ENCODE measurements at regions of chr11 and their contacts with region 1.

Region 1: DNA sequence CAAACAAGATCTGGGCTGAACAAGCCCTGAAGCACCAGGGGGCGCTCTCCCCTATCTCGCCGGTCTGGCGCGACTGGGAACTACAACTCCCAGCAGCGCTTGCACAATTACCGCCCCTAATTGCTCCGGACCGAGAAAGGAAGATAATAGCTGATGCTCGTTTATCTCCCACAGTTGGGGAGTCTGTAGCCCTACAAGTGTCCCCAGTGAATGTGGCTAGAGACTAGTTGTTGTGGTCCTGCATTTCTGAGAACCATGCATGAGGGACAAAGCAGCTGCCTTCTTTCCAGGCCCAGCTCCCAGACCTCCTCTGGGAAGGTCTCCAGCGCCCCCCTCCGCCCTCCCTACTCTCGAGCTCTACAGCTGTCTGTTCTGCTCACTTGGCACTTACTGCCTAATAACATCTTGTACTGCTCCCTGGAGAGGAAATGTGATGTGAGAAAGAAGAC is 34.4 kb downstream of the NRXN2 start:
- DNase-seq: peak; percentile 46
- ATAC-seq: peak; percentile 99
- H3K4me3 ChIP-seq: no peak overlapping the region; the same call in 1 of the 2 replicates
- H3K27ac ChIP-seq: no peak overlapping the region
- H3K4me1 ChIP-seq: 0 out of 2 replicates have a peak, but pooled peaks cover 3% of the 10 kb centered on the region
- H3K27me3 ChIP-seq: no peaks in the 10 kb centered on the region; a peak in 1 of 4 replicates
- CTCF ChIP-seq: peak; percentile 83 to 92 (median 92)
- EP300 ChIP-seq: no peak
- POLR2A ChIP-seq: no peak
- RAD21 ChIP-seq: peak; percentile 69

Region 2: GRCh38 chr11:64378335-64378880 is 310.1 kb before region 1 on chr11:
- CTCF ChIA-PET with region 1: no interaction called
- POLR2A ChIA-PET with region 1: no interaction called
- RAD21 ChIA-PET with region 1: no interaction called
- SMC1A ChIA-PET with region 1: no interaction called
- in situ Hi-C with region 1: no loop called
- intact Hi-C with region 1: no loop called
- DNase-seq: no peak
- ATAC-seq: no peak
- H3K4me3 ChIP-seq: no peak overlapping the region
- H3K27ac ChIP-seq: no peak overlapping the region
- H3K4me1 ChIP-seq: no peaks in the 10 kb centered on the region
- H3K27me3 ChIP-seq: peaks cover 0 to under 1% of the 10 kb centered on the region in 2 experiments; a peak in 1 of 4 replicates
- CTCF ChIP-seq: no peak
- EP300 ChIP-seq: no peak
- POLR2A ChIP-seq: no peak
- RAD21 ChIP-seq: no peak

Region 3: GRCh38 chr11:64448599-64449556 is 239.7 kb before region 1 on chr11:
- CTCF ChIA-PET with region 1: interaction called, 19 read pairs
- POLR2A ChIA-PET with region 1: no interaction called
- RAD21 ChIA-PET with region 1: interaction called, 9 read pairs
- SMC1A ChIA-PET with region 1: no interaction called
- in situ Hi-C with region 1: no loop called
- intact Hi-C with region 1: no loop called
- DNase-seq: no peak
- ATAC-seq: peak; percentile 95
- H3K4me3 ChIP-seq: peak overlapping the region; percentile 67
- H3K27ac ChIP-seq: peak overlapping the region; percentile 58
- H3K4me1 ChIP-seq: peaks cover 21% of the 10 kb centered on the region
- H3K27me3 ChIP-seq: 0 out of 4 replicates have a peak, but pooled peaks cover 0 to 2% of the 10 kb centered on the region in 2 experiments
- CTCF ChIP-seq: peak; percentile 80 to 90 (median 90)
- EP300 ChIP-seq: no peak
- POLR2A ChIP-seq: no peak
- RAD21 ChIP-seq: peak; percentile 56

Region 4: DNA sequence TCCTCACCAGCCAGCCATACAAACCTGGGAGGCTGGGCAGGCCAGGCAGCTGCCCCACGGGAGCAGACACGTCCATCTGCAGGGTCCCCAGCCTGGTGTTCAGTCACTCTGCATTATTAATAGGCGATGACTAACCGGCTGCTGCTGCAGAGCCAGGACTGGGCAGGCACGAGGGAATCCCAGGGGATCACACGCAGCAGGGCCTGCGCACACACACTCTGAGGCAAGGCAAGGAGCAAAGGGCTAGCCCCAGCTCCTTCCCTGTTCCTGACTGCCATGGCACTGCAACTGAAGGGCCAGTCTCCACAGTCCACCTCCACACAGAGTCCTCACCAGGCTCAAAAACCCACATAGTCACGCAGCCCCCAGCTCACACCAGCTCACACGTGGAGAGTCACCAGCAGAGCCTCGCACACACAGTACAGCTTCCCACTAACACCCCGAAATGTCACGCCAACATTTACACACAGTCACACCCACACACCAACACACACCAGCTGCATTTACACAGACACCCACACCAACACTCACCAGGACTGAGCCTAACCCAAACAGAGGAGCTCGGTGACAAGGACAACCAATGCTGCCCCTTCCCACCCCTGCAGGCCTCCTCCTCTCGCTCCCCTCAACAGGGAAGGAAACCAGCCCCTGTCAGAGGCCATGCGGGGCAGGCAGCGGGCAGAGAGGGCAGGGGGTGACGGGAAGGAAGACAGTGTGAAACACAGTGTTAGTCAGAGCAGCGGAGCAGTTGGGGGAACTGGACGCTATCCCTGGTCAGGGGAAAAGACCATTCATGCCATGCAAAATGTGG is 12.9 kb before region 1 on chr11:
- CTCF ChIA-PET with region 1: interaction called, 67 read pairs
- POLR2A ChIA-PET with region 1: no interaction called
- RAD21 ChIA-PET with region 1: interaction called, 29 read pairs
- SMC1A ChIA-PET with region 1: interaction called, 30 read pairs
- in situ Hi-C with region 1: no loop called
- intact Hi-C with region 1: no loop called
- DNase-seq: no peak
- ATAC-seq: peak; percentile 76
- H3K4me3 ChIP-seq: no peak overlapping the region
- H3K27ac ChIP-seq: no peak overlapping the region
- H3K4me1 ChIP-seq: peaks cover 28% of the 10 kb centered on the region
- H3K27me3 ChIP-seq: peaks cover 2 to 4% of the 10 kb centered on the region in 2 experiments; a peak in 3 of 4 replicates
- CTCF ChIP-seq: no peak
- EP300 ChIP-seq: no peak
- POLR2A ChIP-seq: no peak
- RAD21 ChIP-seq: no peak

Region 5: DNA sequence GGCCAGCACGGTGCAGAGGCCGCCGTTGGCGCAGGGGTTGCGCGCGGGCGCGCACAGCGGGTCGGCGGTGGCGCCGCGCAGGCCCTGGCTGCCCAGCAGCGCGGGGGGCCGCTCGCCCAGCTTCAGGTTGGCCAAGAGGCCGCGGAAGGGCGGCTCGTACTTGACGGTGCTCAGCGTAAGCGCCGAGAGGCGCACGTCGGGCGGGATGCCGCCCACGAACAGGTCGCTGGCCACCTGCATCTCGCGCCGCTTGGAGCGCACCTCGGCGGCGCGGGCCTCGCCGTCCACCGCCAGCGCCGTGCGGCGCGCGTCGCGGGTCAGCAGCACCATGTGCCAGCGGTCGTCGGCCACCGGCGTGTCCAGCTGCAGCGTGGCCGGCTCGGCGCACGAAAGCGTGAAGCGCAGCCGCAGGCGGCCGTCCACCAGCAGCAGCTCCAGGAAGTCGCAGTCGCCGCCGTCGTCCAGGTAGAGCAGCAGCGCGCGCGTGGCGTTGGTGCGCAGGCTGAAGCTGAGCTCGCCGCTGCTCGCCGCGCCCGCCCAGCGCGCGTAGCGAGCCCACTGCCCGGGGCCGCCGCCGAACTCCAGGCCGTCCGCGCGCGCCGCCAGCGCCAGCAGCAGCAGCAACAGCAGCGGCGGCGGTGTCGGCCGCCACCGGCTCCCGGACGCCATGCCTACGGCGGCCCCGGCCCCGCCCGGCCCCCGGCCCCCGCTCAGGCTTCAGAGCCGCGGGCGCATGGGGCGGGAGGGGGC is 24.6 kb after region 1 on chr11:
- CTCF ChIA-PET with region 1: interaction called, 58 read pairs
- POLR2A ChIA-PET with region 1: no interaction called
- RAD21 ChIA-PET with region 1: interaction called, 12 read pairs
- SMC1A ChIA-PET with region 1: interaction called, 7 read pairs
- in situ Hi-C with region 1: no loop called
- intact Hi-C with region 1: no loop called
- DNase-seq: no peak
- ATAC-seq: no peak
- H3K4me3 ChIP-seq: no peak overlapping the region
- H3K27ac ChIP-seq: no peak overlapping the region
- H3K4me1 ChIP-seq: peaks cover 7% of the 10 kb centered on the region
- H3K27me3 ChIP-seq: peaks cover 6 to 10% of the 10 kb centered on the region in 2 experiments; a peak in 3 of 4 replicates
- CTCF ChIP-seq: no peak
- EP300 ChIP-seq: no peak
- POLR2A ChIP-seq: no peak
- RAD21 ChIP-seq: no peak

Region 6: DNA sequence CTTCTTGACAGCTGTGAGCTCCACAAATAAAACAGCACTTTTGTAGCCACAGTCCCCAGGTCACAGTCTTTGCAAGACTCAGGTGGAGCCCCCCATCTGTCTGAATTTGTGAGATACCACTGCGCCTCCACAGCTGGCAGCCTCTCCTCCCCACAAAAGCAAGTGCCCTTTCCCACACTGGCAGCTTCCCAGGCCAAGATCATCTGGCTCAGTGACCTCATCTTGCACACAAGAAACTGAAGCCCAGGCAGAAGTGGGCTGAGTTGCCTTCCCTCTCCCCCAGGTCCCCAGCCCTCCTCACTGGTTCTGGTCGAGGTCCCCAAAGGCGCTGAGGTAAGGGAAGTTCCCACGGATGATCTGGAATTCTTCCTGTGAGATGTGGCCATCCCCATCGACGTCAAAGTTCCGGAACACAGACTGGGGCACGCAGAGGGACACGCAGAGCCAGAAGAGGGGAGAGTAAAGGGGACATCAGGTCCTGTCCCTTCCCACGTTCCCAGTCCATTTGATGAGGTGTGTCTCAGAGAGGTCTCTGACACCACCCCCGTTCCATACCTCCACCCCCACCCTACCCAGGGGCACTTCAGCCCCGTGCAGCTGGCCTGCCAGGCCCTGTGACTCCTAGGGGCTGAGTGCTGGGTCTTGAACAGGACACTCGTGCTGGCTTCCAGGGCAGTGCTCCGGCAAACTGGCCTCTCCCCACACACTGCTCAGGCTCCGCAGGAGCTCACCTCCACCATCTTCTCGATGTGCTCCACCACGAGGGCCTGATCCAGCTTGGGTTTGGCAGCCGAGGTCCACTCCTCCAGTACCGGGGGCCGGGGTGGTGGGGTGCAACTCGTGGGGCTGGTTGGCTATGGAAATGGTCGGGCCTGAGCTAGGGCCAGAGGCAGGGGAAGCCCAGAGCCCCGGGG is 46.5 kb after region 1 on chr11:
- CTCF ChIA-PET with region 1: interaction called, 86 read pairs
- POLR2A ChIA-PET with region 1: no interaction called
- RAD21 ChIA-PET with region 1: interaction called, 12 read pairs
- SMC1A ChIA-PET with region 1: interaction called, 11 read pairs
- in situ Hi-C with region 1: loop called (anchors 5 kb)
- intact Hi-C with region 1: no loop called
- DNase-seq: no peak
- ATAC-seq: no peak
- H3K4me3 ChIP-seq: no peak overlapping the region
- H3K27ac ChIP-seq: no peak overlapping the region
- H3K4me1 ChIP-seq: no peaks in the 10 kb centered on the region
- H3K27me3 ChIP-seq: no peaks in the 10 kb centered on the region
- CTCF ChIP-seq: no peak
- EP300 ChIP-seq: no peak
- POLR2A ChIP-seq: no peak
- RAD21 ChIP-seq: no peak

Region 7: DNA sequence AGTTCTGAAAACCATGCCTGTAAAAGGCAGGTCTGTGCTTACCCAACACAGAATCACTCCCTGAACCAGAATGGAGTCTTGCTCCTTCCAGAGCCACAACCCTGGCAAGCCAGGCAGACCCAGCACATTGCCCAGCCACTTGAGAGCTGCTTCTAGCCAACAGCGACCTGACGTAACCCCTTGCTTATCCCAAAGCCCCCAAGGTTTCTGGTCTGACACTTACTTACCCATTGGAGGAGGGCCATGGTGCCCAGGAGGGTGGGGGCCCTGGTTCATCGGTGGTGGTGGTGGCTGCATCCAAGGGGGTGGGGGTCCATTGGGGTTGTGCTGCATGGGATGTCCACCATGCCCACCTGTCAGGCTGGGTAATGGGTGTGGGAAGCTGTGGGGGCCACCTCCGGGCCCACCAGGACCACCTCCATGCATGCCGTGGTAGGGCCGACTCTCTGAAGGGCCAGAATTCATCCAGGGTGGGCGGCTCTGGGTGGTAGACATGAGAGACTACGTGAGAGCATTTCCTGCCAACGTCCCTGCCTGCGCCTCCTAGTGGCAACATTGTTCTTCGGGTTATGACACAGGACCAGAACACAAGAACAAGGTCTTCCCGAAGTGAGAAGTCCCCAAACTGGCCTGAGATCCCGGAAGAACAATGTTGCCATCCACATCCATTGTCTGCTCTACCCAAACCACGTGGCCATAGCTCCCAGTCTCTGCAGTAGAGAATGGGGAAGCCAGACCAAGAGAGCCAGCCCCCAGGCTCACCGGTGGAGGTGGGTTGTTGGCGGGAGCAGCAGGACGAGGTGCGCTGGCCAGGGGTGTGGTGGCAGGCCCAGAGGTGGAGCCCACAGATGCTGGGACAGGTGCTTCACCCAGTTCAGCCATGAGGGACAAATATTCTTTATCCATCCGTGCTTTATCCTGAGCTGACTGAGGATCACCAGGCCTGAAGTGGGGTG is 79.1 kb after region 1 on chr11:
- CTCF ChIA-PET with region 1: interaction called, 10 read pairs
- POLR2A ChIA-PET with region 1: no interaction called
- RAD21 ChIA-PET with region 1: interaction called, 9 read pairs
- SMC1A ChIA-PET with region 1: interaction called, 4 read pairs
- in situ Hi-C with region 1: no loop called
- intact Hi-C with region 1: no loop called
- DNase-seq: no peak
- ATAC-seq: peak; percentile 56
- H3K4me3 ChIP-seq: no peak overlapping the region
- H3K27ac ChIP-seq: no peak overlapping the region
- H3K4me1 ChIP-seq: peaks cover 24% of the 10 kb centered on the region
- H3K27me3 ChIP-seq: no peaks in the 10 kb centered on the region
- CTCF ChIP-seq: peak; percentile 55 to 84 (median 72)
- EP300 ChIP-seq: no peak
- POLR2A ChIP-seq: peak; percentile 70
- RAD21 ChIP-seq: 0 out of 2 replicates have a peak, but pooled peaks have one; percentile 34

Measured in GM12878 (cell line).